ENCODE measurements at regions of chr4 and their contacts with region 1.

Region 1: DNA sequence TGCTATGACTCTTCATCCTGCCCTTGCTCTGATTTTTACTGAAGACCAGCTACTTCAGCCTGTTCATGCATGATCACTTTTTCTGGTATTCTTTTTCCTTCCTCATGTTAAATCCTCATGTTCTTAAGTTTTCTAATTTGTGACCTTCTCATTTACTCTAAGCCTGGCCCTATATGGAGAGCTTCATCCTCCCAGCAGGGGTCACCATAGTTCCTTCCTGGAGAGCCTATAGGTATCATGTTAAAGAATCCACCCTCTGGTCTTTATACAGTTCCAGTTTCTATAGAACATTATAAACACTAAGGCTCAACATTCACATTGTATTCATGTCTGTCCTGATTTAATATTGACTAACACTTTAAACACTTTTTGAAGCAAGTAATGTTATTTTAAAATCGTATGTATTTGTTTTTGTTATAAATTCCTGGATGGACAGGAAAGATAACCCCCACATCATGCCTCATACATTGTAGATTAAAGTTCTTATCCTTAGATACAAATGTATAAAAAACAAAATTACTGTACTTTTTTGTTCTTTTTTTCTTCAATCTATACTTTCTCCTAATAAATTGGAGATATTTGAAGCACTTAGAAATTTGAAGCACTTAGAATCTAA is 53.8 kb upstream of the OTUD4 start:
- DNase-seq: peak in 2 of 3 donors; percentile 31 to 86
- ATAC-seq: peak; percentile 87
- H3K4me3 ChIP-seq: no peak overlapping the region
- H3K4me1 ChIP-seq: no peaks in the 10 kb centered on the region
- CTCF ChIP-seq: peak; percentile 30

Region 2: GRCh38 chr4:145609481-145610427 is 375.6 kb after region 1 on chr4:
- intact Hi-C with region 1: loop called in 1 of 2 experiments (anchors 10 kb)
- DNase-seq: peak in 2 of 3 donors; percentile 54 to 89
- ATAC-seq: peak; percentile 73
- H3K4me3 ChIP-seq: no peak overlapping the region
- H3K4me1 ChIP-seq: no peaks in the 10 kb centered on the region
- CTCF ChIP-seq: peak; percentile 62